AG04450 (cell line): ENCODE measurements at regions of chr19 and their contacts with region 1.

Region 1: DNA sequence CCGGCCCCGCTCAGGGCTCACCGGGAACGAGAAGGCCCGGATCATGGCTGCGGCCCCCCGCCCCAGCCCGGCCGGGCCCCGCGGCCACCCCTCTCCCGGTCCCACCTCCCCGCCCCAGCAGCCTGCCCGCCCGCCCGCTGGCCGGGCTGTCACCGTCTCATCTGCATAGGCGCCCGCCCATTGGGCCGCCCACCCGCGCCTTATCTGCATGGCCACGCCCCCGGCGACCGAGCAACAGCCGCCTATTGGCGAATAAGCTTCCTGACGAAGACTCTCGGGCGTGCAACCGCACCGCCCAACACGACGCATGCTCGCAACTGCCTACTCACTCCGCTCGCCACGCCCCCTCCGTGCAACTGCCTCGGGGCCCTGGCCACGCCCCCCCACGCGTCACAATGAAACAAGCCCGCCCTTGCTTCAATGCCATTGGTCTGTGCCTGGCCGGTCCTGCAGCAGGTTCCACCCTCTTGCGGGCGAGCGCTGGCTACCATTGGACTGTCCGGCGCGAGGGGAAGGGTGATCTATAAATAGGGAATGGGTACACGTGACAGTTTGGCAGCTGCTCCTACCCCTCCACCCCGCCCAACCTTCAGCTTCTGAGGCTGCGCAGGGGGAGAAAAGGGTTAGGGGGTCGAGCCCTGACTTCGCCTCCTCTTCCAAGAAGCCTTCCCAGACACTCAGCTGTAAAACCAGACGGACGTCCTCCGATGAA is at the start of gene DACT3:
- DNase-seq: peak; percentile 100
- H3K4me3 ChIP-seq: peak within 1 kb of the TSS; percentile 67
- H3K27ac ChIP-seq: peak within 1 kb of the TSS; percentile 65
- H3K27me3 ChIP-seq: no peaks in the 10 kb centered on the region
- CTCF ChIP-seq: no peak
- polyA plus RNA-seq, gene DACT3: 6.1 and 6.9 TPM in 2 replicates

Region 2: DNA sequence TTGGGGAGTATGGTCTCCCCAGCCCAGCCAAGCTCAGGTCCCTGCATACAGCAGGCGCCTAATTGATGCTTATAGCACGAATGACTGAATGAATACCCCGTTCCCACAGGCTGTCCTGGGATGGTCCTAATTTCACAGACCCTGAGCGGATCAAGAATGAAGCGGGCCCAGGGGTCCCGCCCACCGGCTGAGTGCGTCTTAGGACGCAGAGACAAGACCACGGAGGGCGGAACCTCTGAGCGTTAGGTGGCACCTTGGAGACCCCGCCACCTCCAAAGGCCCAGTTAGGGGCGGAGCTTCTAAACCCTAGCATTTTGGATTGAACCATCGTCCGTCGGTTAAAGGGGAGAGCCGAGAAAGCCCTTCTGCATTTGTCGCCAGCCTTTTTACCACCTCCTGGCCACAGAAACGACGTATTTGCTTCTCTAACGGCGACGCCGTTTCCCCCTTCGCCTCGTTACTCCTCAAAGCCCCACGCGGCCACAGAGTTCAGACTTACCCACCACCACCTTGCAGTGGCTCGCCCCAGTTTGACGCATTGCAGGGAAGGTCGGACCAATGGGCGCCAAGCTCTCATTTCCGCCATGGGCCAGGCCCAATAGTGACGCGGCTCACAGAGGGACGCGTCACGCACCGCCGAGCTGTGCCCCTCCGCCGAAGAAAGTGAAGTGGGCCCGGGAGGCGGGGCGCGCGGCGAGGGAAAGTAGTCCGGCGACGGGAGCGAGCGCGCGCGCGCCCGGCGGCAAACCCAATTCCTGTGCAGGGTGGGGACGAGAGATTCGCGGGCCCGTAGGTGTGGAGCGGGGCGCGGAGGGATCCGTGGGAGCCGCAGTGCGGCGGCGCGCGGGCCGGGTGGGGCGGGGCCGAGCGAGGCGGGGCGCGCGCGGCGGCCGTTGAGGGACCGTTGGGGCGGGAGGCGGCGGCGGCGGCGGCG is 60.5 kb before region 1 on chr19:
- CTCF ChIA-PET with region 1: interaction called, 17 read pairs
- POLR2A ChIA-PET with region 1: interaction called, 11 read pairs
- DNase-seq: peak; percentile 97
- H3K4me3 ChIP-seq: peak overlapping the region; percentile 94
- H3K27ac ChIP-seq: peak overlapping the region; percentile 99
- H3K27me3 ChIP-seq: no peaks in the 10 kb centered on the region
- CTCF ChIP-seq: no peak

Region 3: DNA sequence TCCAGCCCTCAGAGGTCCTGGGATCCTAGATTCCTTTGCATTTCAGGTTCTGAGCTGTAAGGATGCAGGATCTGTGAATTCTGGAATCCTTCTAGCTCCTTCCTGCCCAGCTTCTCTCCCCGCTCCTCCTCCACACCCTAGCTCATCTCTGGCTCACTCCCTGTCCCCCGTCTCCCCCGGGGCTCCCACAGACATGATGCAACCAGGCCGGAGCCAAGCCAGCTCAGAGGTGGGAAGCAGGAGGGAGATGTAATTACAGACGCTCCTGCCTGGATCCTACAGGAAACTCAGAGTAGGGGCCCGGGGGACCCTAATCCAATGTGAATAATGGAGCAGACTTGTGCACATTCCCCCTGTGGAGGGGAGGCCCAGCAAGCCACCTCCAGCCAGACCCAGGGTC is 29.7 kb before region 1 on chr19:
- CTCF ChIA-PET with region 1: interaction called, 14 read pairs
- POLR2A ChIA-PET with region 1: interaction called, 4 read pairs
- DNase-seq: no peak
- H3K4me3 ChIP-seq: no peak overlapping the region
- H3K27ac ChIP-seq: no peak overlapping the region
- H3K27me3 ChIP-seq: peaks cover 7% of the 10 kb centered on the region
- CTCF ChIP-seq: no peak

Region 4: GRCh38 chr19:46646402-46646801 is 14.8 kb before region 1 on chr19:
- CTCF ChIA-PET with region 1: no interaction called
- POLR2A ChIA-PET with region 1: no interaction called
- DNase-seq: no peak
- H3K4me3 ChIP-seq: no peak overlapping the region
- H3K27ac ChIP-seq: no peak overlapping the region
- H3K27me3 ChIP-seq: peaks cover 3% of the 10 kb centered on the region
- CTCF ChIP-seq: no peak

Region 5: DNA sequence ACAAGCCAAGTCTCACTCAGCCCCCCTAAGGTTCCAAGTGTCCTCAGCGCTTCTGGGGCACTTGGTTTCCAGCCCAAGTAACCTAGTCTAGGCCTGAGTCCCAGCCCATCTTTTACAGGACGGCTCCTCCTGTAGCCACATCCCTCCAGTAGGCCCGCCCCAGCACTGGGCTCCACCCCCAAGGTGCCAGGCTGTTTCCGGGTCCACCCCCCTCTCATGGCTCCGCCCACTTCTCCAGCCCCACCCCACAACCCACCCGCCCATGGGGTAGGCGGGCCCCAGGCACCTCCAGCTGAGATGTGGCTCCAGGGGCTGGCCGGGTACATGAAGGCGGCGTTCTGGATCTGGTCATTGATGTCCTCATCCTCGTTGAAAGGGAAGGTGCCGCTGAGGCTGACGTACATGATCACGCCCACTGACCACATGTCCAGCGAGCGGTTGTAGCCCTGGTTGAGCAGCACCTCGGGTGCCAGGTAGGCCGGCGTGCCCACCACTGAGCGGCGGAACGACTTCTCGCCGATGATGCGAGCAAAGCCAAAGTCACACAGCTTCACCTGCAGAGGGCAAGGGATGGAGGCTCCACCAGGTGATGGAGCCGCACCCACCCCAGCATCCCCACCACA is 17.0 kb after region 1 on chr19:
- CTCF ChIA-PET with region 1: interaction called, 13 read pairs
- POLR2A ChIA-PET with region 1: no interaction called
- DNase-seq: no peak
- H3K4me3 ChIP-seq: no peak overlapping the region
- H3K27ac ChIP-seq: no peak overlapping the region
- H3K27me3 ChIP-seq: no peaks in the 10 kb centered on the region
- CTCF ChIP-seq: no peak